Right ventricle myocardium superior (tissue), 1 donor: ENCODE measurements at regions of chr4 and their contacts with region 1.

Region 1: GRCh38 chr4:157045507-157046127 is 30.3 kb upstream of the GLRB start:
- DNase-seq: no peak
- ATAC-seq: peak; percentile 85

Region 2: GRCh38 chr4:156475322-156475721 is 570.3 kb before region 1 on chr4:
- intact Hi-C with region 1: loop called (anchors 5 kb)
- DNase-seq: no peak
- ATAC-seq: peak; percentile 72

Region 3: GRCh38 chr4:156594624-156595023 is 451.0 kb before region 1 on chr4:
- intact Hi-C with region 1: loop called (anchors 10 kb)
- DNase-seq: peak; percentile 68
- ATAC-seq: no peak

Region 4: GRCh38 chr4:157079441-157079840 is 33.8 kb after region 1 on chr4:
- intact Hi-C with region 1: no loop called
- DNase-seq: no peak
- ATAC-seq: no peak